ENCODE measurements at regions of chr11 and their contacts with region 1.

Region 1: DNA sequence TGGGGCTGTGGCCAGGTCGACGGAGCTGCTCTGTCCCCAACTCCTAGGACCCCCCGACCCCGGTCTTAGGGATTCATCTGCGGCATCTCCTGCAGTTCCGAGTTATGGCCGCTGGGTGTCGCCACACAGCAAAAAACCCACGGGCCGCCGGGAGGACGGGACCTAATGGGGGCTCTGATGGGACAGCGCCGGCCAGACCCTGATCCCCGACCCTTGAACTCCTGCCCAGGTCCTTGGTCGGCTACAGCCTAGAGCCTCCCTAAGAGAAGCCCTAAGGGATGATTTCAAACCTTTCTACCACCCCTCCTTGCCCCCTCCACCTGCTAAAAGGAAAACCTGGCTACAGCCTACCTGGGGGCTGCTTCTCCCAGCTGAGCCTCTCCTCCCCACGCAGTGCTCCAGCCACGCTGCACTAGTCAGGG is 30.8 kb upstream of the LRRC10B start:
- DNase-seq: peak; percentile 79
- H3K4me3 ChIP-seq: no peak overlapping the region
- H3K27ac ChIP-seq: no peak overlapping the region
- H3K4me1 ChIP-seq: peaks cover 0 to 29% (median 23%) of the 10 kb centered on the region in 4 donors
- H3K27me3 ChIP-seq: peaks cover 0 to 4% (median 0%) of the 10 kb centered on the region in 3 donors
- CTCF ChIP-seq: peak; percentile 81 to 95 (median 92)
- EP300 ChIP-seq: no peak
- POLR2A ChIP-seq: no peak

Region 2: GRCh38 chr11:61406067-61406466 is 71.7 kb before region 1 on chr11:
- intact Hi-C with region 1: no loop called
- DNase-seq: no peak
- H3K4me3 ChIP-seq: no peak overlapping the region
- H3K27ac ChIP-seq: peak overlapping the region in 3 of 4 donors; percentile 28 to 49 (median 47)
- H3K4me1 ChIP-seq: no peaks in the 10 kb centered on the region
- H3K27me3 ChIP-seq: no peaks in the 10 kb centered on the region
- CTCF ChIP-seq: no peak
- EP300 ChIP-seq: no peak
- POLR2A ChIP-seq: no peak

Region 3: DNA sequence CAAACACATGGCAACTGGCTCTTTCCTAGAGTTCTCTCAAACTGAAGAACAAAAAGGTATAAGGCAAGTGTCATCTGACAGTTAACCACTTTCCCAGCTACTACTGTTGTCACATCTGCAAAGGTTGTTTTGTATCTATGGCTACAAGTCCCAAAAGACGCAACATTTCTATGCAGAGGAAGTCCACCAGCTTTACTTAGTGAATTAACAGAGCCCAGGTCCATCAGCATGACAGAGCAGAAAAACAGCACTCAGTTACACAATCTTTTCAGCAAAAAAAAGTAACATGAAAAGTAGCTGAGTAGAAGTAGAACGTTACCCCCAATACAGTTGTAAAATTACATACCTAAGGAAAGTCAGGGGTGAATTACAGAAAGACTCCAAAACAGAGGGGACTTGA is 60.1 kb before region 1 on chr11:
- intact Hi-C with region 1: no loop called
- DNase-seq: no peak
- H3K4me3 ChIP-seq: no peak overlapping the region
- H3K27ac ChIP-seq: no peak overlapping the region
- H3K4me1 ChIP-seq: no peaks in the 10 kb centered on the region
- H3K27me3 ChIP-seq: no peaks in the 10 kb centered on the region
- CTCF ChIP-seq: no peak
- EP300 ChIP-seq: no peak
- POLR2A ChIP-seq: no peak

Region 4: GRCh38 chr11:61516675-61517572 is 39.2 kb after region 1 on chr11:
- intact Hi-C with region 1: loop called (anchors 1 kb)
- DNase-seq: no peak
- H3K4me3 ChIP-seq: peak overlapping the region in 2 of 4 donors; percentile 20 to 28
- H3K27ac ChIP-seq: peak overlapping the region in 2 of 4 donors; percentile 21 to 40
- H3K4me1 ChIP-seq: peaks cover 0 to 13% (median 10%) of the 10 kb centered on the region in 4 donors
- H3K27me3 ChIP-seq: peaks cover 0 to 5% (median 0%) of the 10 kb centered on the region in 3 donors
- CTCF ChIP-seq: peak; percentile 97 to 100 (median 98)
- EP300 ChIP-seq: no peak
- POLR2A ChIP-seq: no peak

Region 5: GRCh38 chr11:61639816-61640443 is 162.2 kb after region 1 on chr11:
- intact Hi-C with region 1: loop called (anchors 10 kb)
- DNase-seq: no peak
- H3K4me3 ChIP-seq: no peak overlapping the region
- H3K27ac ChIP-seq: no peak overlapping the region
- H3K4me1 ChIP-seq: peaks cover 0 to 4% (median 0%) of the 10 kb centered on the region in 4 donors
- H3K27me3 ChIP-seq: peaks cover 0 to 4% (median 3%) of the 10 kb centered on the region in 3 donors
- CTCF ChIP-seq: no peak
- EP300 ChIP-seq: no peak
- POLR2A ChIP-seq: no peak